Activated CD8-positive, alpha-beta T cell treated with anti-CD3 and anti-CD28 coated beads for 36 hours (primary cell): ENCODE measurements at regions of chr2 and their contacts with region 1.

Region 1: GRCh38 chr2:231514103-231514950 is 15.9 kb downstream of the NMUR1 start:
- DNase-seq: peak; percentile 99
- ATAC-seq: peak; percentile 99
- H3K4me3 Mint-ChIP-seq: peak overlapping the region; percentile 85
- H3K27ac Mint-ChIP-seq: peak overlapping the region; percentile 97
- H3K4me1 Mint-ChIP-seq: peaks cover 17% of the 10 kb centered on the region
- H3K27me3 Mint-ChIP-seq: no peaks in the 10 kb centered on the region
- CTCF ChIP-seq: no peak

Region 2: DNA sequence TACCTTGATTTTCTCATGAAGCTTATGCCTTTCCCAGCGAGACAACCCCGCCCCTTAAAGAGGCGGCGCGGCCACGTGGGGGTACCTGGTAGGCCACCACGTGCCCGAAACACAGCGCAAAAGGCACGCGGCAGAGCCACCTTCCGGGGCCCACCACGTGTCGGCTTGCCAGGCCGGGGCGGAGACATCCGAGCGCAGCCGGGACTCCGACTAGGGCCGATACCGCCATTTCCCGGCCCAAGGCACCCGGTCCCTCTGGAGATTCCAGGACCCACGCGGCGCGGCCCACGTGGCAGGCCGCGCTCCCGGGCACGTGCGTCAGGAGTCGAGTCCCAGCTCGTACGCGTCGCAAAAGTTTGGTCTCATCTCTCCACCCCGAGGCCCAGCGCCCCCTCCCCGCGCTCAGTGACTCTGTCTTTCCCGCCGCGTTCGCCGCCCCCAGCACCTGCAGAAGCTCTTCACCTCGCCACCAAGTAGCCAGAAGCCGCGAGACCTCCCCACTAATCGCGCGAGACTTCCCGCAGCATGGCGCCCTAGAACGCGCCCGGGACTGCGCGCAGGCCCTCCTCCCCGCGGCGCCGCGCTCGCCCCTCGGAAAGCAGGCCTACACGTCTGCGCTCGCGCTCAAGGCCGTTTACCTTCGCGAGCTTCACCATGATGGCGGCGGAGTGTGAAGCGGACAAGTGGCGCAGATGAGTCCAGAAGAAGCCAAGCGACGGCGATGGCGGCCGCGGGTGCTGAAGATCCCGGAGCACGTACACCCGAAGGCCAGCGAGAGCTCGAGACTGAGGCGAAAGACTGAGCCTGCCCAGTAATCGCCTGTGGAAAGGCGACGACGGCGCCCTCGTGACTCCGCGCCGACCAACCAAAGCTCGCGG is 50.4 kb before region 1 on chr2 and contains the start of gene NCL:
- CTCF ChIA-PET with region 1: interaction called, 5 read pairs
- POLR2A ChIA-PET with region 1: interaction called, 57 read pairs
- intact Hi-C with region 1: loop called (anchors 5 kb)
- DNase-seq: peak; percentile 89
- ATAC-seq: peak; percentile 47
- H3K4me3 Mint-ChIP-seq: peak within 1 kb of the TSS; percentile 100
- H3K27ac Mint-ChIP-seq: peak within 1 kb of the TSS; percentile 98
- H3K4me1 Mint-ChIP-seq: peaks cover 38% of the 10 kb centered on the region
- H3K27me3 Mint-ChIP-seq: no peaks in the 10 kb centered on the region
- CTCF ChIP-seq: no peak
- total RNA-seq, gene NCL: 1,312 to 1,361 TPM

Region 3: DNA sequence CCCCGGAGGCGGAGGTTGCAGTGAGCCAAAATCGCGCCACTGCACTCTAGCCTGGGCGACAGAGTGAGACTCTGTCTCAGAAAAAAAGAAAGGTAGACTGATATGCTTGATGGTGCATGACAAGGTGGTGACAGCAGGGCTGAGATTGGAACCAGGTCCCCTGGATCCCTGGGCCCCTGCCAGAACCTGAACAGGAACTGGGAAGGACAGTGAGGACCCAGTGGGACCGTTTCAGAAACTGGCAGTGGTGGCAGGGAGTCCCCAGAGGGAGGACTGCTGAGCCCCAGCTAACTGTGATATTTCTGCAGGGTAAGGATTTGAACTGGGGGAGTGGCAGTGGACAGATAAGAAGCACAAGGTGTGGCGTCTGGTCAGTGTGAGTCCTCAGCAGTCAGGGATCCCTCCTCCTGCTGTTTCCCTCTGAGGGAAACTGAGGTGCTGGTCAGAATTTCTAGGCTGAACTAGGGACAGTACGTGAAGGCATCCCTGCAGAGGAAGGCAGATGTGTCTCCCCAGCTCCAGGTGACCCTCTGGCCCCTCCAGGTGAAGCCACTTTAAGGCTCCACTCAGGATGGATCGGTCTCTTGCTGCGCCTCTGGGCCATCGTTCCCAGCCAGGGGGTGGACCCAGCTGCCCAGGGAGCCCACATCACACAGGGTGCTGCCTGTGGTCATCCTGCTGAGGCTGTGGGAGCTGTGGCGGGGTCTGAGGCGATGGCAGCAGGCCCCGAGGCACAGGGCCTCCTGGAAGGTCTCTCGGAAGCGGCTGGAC is 10.3 kb after region 1 on chr2:
- CTCF ChIA-PET with region 1: interaction called, 20 read pairs
- POLR2A ChIA-PET with region 1: interaction called, 6 read pairs
- intact Hi-C with region 1: no loop called
- DNase-seq: no peak
- ATAC-seq: no peak
- H3K4me3 Mint-ChIP-seq: no peak overlapping the region
- H3K27ac Mint-ChIP-seq: peak overlapping the region; percentile 26
- H3K4me1 Mint-ChIP-seq: peaks cover 21% of the 10 kb centered on the region
- H3K27me3 Mint-ChIP-seq: peaks cover 10% of the 10 kb centered on the region
- CTCF ChIP-seq: no peak

Region 4: DNA sequence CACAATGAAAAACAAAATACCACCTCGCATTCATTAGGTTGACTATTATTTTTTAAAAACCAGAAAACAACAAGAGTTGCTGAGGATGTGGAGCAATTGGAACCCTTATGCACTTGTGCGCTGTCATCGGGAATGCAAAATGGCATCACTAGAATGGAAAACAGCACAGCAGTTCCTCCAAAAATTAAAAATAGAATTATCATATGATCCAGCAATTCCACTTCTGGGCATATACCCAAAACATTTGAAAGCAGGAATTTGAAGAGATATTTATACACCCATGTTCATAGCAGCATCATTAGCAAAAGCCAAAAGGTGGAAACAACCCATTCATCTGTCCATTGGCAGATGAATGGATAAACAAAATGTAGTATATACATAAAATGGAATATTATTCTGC is 27.8 kb after region 1 on chr2:
- CTCF ChIA-PET with region 1: interaction called, 11 read pairs
- POLR2A ChIA-PET with region 1: interaction called, 3 read pairs
- intact Hi-C with region 1: no loop called
- DNase-seq: no peak
- ATAC-seq: no peak
- H3K4me3 Mint-ChIP-seq: no peak overlapping the region
- H3K27ac Mint-ChIP-seq: no peak overlapping the region
- H3K4me1 Mint-ChIP-seq: peaks cover 20% of the 10 kb centered on the region
- H3K27me3 Mint-ChIP-seq: no peaks in the 10 kb centered on the region
- CTCF ChIP-seq: no peak

Region 5: DNA sequence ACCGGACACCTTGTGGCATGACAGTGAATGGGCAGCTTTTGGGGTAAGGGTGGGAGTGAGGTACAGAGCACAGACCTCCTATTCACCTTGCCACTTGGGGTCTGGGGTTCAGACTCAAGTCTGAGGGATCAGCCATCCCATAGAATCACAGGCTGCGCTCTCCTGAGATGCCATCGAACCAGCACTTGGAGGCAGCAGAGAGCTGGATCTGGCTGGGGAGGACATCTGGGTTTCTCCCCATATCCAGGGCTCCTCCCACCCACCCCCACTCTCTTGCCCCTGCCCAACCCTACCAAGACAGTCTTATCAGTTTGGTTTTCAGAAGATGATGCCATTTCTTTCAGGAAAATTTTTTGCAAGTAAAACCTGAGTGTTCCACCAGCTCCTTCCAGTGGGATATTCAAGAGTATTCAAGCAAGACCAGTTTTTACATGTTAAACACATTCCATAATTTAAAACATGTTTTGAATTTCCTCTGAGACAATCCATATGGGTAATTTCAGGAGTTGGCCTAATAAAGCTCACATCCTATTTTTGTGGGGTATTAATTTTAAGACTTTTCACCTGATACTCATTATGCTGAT is 49.1 kb after region 1 on chr2:
- CTCF ChIA-PET with region 1: interaction called, 27 read pairs
- POLR2A ChIA-PET with region 1: interaction called, 3 read pairs
- intact Hi-C with region 1: loop called (anchors 5 kb)
- DNase-seq: peak; percentile 66
- ATAC-seq: peak; percentile 99
- H3K4me3 Mint-ChIP-seq: no peak overlapping the region
- H3K27ac Mint-ChIP-seq: no peak overlapping the region
- H3K4me1 Mint-ChIP-seq: peaks cover under 1% of the 10 kb centered on the region
- H3K27me3 Mint-ChIP-seq: no peaks in the 10 kb centered on the region
- CTCF ChIP-seq: peak; percentile 71